Activated T-helper 1 cell treated with anti-CD3 and anti-CD28 coated beads, Interleukin-12 subunit alpha, Interleukin-12 subunit beta, Interleukin-2, Interleukin-4 antibody, amounts not matched to agents 30 ng/mL and 10 ng/mL and 1 ng/mL, durations not matched to agents 14 hours and 24 hours and 36 hours (primary cell): ENCODE measurements at regions of chr9 and their contacts with region 1.

Region 1: GRCh38 chr9:34048923-34049697 is 423 bp upstream of the UBAP2 start:
- DNase-seq: peak; percentile 94
- H3K4me3 Mint-ChIP-seq: peak overlapping the region; percentile 98
- H3K27ac Mint-ChIP-seq: peak overlapping the region; percentile 100
- H3K4me1 Mint-ChIP-seq: peaks cover 44% of the 10 kb centered on the region
- H3K27me3 Mint-ChIP-seq: no peaks in the 10 kb centered on the region

Region 2: GRCh38 chr9:33264473-33265177 is 784.5 kb before region 1 on chr9 and contains the starts of genes BAG1 and CHMP5:
- intact Hi-C with region 1: loop called (anchors 2 kb)
- DNase-seq: peak; percentile 99
- H3K4me3 Mint-ChIP-seq: peak within 1 kb of the TSS; percentile 96
- H3K27ac Mint-ChIP-seq: peak within 1 kb of the TSS; percentile 94
- H3K4me1 Mint-ChIP-seq: peaks cover 58% of the 10 kb centered on the region
- H3K27me3 Mint-ChIP-seq: no peaks in the 10 kb centered on the region
- total RNA-seq, gene BAG1: 75.0 and 78.2 TPM in 2 replicates
- total RNA-seq, gene CHMP5: 70.7 and 76.7 TPM in 2 replicates

Region 3: DNA sequence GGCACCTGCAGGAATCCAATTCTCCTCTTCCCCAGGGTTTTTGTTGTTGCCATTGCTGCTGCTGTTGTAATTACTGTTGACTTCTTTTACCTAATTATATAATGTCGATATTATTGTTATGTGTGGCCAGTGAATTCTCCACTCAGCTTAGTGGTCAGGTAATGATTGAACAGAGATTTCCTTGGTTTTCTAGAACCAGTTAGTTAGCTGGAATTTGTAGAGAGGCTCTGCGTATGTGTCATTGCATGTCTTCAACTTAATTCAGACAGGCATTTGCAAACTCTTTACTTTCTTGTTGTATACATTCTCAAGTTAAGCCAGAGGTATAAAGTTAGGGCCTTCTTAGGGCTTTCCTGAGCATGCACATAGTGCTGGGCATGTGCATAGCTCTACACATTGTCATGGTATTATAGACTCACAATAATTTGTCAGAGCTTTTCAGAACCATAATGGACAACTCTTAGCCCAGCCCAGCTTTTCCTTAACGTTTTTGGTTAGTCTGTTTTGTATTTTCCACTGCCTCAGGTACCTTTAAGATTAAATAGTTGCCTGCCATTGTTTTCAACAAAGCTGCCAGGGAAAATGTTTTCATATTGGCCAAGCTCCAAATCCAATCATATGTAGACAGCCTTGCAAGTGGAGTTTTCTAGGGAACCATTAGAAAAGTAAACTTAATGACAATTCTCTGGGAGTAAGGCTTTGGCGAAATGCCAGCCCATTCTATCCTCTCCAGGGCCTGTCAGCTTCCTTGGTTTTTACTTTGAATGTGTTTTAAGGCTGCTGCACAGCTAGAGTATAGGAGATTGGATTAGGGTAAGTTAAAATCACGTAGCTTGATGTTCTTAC is 164.0 kb before region 1 on chr9:
- intact Hi-C with region 1: no loop called
- DNase-seq: no peak
- H3K4me3 Mint-ChIP-seq: no peak overlapping the region
- H3K27ac Mint-ChIP-seq: peak overlapping the region; percentile 22
- H3K4me1 Mint-ChIP-seq: peaks cover 30% of the 10 kb centered on the region
- H3K27me3 Mint-ChIP-seq: no peaks in the 10 kb centered on the region

Region 4: GRCh38 chr9:34001298-34001697 is 47.8 kb before region 1 on chr9:
- intact Hi-C with region 1: no loop called
- DNase-seq: no peak
- H3K4me3 Mint-ChIP-seq: no peak overlapping the region
- H3K27ac Mint-ChIP-seq: no peak overlapping the region
- H3K4me1 Mint-ChIP-seq: no peaks in the 10 kb centered on the region
- H3K27me3 Mint-ChIP-seq: no peaks in the 10 kb centered on the region

Region 5: GRCh38 chr9:34072868-34073590 is 23.9 kb after region 1 on chr9:
- intact Hi-C with region 1: loop called (anchors 1 kb)
- DNase-seq: no peak
- H3K4me3 Mint-ChIP-seq: no peak overlapping the region
- H3K27ac Mint-ChIP-seq: no peak overlapping the region
- H3K4me1 Mint-ChIP-seq: peaks cover 5% of the 10 kb centered on the region
- H3K27me3 Mint-ChIP-seq: no peaks in the 10 kb centered on the region

Region 6: DNA sequence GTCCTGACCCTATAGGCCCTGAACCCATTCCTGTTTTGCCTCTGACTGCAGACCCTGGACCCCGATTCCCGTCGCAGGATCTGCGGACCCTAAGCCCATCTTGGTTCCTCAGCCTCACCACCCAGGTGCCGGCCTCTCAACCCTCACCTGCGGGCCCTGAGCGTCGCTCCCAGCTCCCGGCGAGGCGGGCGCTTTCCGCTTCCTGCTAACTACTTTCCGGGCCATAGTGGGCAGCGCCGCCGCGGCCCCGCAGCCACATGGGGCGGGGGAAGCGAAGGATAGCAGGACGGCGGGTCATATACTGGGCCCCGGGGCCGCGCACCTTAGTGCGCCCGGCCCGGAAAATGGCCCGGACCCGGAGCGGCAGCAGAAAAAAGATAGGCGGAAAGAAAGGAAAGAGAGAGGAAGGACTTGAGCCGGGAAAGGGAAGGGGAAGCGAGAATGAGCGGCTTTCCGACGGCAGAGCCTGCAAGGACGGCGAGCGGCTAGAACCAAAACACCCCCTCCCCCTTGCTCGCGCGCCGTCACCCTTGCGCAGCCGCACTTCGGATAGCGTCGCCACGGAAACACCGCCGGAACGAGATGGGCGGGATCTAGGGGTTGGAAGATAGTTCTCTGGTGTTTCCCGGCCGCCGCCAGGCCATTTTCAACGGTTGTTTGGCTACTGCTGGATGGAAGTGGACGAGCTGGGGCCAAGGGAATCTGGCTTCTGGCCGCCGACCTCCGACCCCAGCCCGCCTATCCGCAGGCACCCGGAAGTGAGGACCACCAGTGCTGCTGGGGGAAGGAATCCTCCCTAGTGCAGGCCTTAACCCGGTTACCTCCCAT is 77.3 kb after region 1 on chr9 and contains the start of gene DCAF12:
- intact Hi-C with region 1: loop called (anchors 1 kb)
- DNase-seq: peak; percentile 89
- H3K4me3 Mint-ChIP-seq: peak within 1 kb of the TSS; percentile 96
- H3K27ac Mint-ChIP-seq: peak within 1 kb of the TSS; percentile 96
- H3K4me1 Mint-ChIP-seq: peaks cover 43% of the 10 kb centered on the region
- H3K27me3 Mint-ChIP-seq: no peaks in the 10 kb centered on the region
- total RNA-seq, gene DCAF12: 49.7 and 52.8 TPM in 2 replicates

Region 7: DNA sequence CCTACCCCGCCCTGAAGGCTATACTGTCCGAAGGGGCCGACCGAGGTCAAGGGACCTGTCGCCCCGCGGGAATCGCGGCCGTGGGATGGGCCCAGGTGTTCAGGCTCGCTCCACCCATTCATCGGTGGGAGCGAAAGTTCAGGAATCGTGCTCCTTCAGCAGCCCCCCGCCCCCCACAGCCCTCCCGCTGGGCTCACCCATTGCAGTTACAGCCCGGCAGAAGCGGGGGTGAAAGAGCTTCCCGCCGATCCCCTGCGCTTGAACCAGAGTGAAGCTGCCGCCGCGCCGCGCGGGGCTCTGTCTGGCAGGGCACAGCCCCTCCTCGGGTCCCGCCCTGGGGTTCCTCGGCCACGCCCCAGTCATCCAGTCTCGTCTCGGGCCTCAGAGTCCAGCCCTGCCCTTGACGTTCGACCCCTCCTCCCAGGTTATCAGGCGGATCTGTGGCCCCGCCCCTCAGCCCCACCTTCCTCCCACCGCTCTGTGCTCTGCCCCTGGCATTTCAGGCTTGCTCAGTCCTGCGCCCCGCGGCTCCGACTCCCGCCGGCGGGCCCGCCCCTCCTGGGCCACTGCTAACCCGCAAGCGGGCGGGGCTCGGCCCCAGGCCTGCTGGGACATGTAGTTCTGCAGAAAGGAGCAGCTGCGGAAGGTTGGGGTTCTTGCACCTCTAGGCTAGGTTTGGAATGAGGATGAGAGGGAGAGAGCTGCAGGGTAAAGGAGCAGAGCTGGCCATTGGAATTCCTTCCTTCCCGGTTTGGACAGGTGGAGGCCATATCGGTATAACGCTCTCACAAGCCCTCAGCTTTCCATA is 327.7 kb after region 1 on chr9 and contains the start of gene MYORG:
- intact Hi-C with region 1: loop called (anchors 1 kb)
- DNase-seq: peak; percentile 97
- H3K4me3 Mint-ChIP-seq: peak within 1 kb of the TSS; percentile 88
- H3K27ac Mint-ChIP-seq: peak within 1 kb of the TSS; percentile 32
- H3K4me1 Mint-ChIP-seq: peaks cover 45% of the 10 kb centered on the region
- H3K27me3 Mint-ChIP-seq: peaks cover 13% of the 10 kb centered on the region
- total RNA-seq, gene MYORG: 1.0 and 1.9 TPM in 2 replicates

Region 8: DNA sequence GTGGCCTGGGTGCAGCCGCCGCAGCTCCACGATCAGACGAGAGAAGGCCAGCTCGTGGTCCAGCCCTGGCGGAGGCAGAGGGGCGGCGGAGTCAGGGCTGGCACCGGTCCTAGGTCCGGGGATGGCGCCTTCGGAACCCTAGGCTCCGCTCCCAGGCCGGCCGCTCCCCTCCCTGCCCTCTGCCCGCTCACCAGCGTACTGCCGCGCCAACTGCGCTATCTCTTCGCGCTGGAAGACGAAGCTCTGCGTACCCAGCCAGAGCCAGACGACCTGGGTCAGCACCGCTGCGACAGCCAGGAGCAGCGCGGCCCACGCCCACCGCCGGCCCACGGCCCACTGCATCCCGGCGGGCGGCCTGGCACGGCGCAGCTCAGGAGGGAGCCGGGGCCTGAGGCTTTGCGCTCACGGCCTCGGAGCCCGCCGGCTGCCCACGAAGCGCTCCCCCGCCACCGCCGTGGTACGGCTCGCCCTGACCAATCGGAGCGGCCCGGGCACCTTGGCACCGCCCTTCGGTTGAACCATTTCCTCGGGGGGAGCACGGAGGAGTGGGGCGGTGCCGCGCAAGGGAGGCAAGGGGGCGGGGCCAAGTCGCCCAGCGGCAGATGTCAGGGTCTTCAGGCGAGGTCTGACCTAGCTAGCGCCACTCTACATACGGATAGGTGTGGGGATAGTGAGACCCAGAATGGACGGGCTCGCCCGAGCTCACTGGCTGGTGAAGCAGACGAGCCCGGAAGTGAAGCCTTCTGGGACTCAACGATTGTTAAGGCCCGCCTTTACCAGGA is 588.4 kb after region 1 on chr9 and contains the start of gene SIGMAR1:
- intact Hi-C with region 1: no loop called
- DNase-seq: peak; percentile 94
- H3K4me3 Mint-ChIP-seq: peak within 1 kb of the TSS; percentile 97
- H3K27ac Mint-ChIP-seq: peak within 1 kb of the TSS; percentile 88
- H3K4me1 Mint-ChIP-seq: peaks cover 39% of the 10 kb centered on the region
- H3K27me3 Mint-ChIP-seq: no peaks in the 10 kb centered on the region
- total RNA-seq, gene SIGMAR1: 128 and 130 TPM in 2 replicates